SK-N-SH (cell line): ENCODE measurements at regions of chr20 and their contacts with region 1.

Region 1: GRCh38 chr20:740141-740540 is 28.2 kb downstream of the SLC52A3 start:
- DNase-seq: no peak
- H3K4me3 ChIP-seq: no peak overlapping the region
- H3K27ac ChIP-seq: no peak overlapping the region
- H3K4me1 ChIP-seq: no peaks in the 10 kb centered on the region; a peak in 1 of 4 replicates
- H3K27me3 ChIP-seq: no peaks in the 10 kb centered on the region; the same call in 1 of the 2 replicates
- CTCF ChIP-seq: no peak
- EP300 ChIP-seq: no peak
- RAD21 ChIP-seq: no peak

Region 2: GRCh38 chr20:431012-431904 is 308.9 kb before region 1 on chr20:
- CTCF ChIA-PET with region 1: interaction called, 10 read pairs
- POLR2A ChIA-PET with region 1: no interaction called
- DNase-seq: peak; percentile 91
- H3K4me3 ChIP-seq: no peak overlapping the region
- H3K27ac ChIP-seq: peak overlapping the region; percentile 22 to 51; a peak in 2 of 4 replicates
- H3K4me1 ChIP-seq: peaks cover 0 to 5% of the 10 kb centered on the region in 2 experiments; a peak in 1 of 4 replicates
- H3K27me3 ChIP-seq: no peaks in the 10 kb centered on the region
- CTCF ChIP-seq: peak; percentile 74
- EP300 ChIP-seq: no peak
- RAD21 ChIP-seq: peak; percentile 83

Region 3: GRCh38 chr20:561437-562231 is 178.5 kb before region 1 on chr20:
- CTCF ChIA-PET with region 1: interaction called, 83 read pairs
- POLR2A ChIA-PET with region 1: no interaction called
- DNase-seq: peak; percentile 83
- H3K4me3 ChIP-seq: no peak overlapping the region; a peak in 1 of 4 replicates
- H3K27ac ChIP-seq: no peak overlapping the region
- H3K4me1 ChIP-seq: no peaks in the 10 kb centered on the region
- H3K27me3 ChIP-seq: peaks cover 13% of the 10 kb centered on the region
- CTCF ChIP-seq: peak; percentile 94
- EP300 ChIP-seq: no peak
- RAD21 ChIP-seq: peak; percentile 95

Region 4: GRCh38 chr20:609371-609964 is 130.7 kb before region 1 on chr20:
- CTCF ChIA-PET with region 1: interaction called, 12 read pairs
- POLR2A ChIA-PET with region 1: no interaction called
- DNase-seq: peak; percentile 75
- H3K4me3 ChIP-seq: peak overlapping the region in 1 of 2 experiments; percentile 39; a peak in 2 of 4 replicates
- H3K27ac ChIP-seq: no peak overlapping the region
- H3K4me1 ChIP-seq: peaks cover 0 to 11% of the 10 kb centered on the region in 2 experiments; a peak in 1 of 4 replicates
- H3K27me3 ChIP-seq: peaks cover 39% of the 10 kb centered on the region
- CTCF ChIP-seq: no peak
- EP300 ChIP-seq: no peak
- RAD21 ChIP-seq: no peak

Region 5: DNA sequence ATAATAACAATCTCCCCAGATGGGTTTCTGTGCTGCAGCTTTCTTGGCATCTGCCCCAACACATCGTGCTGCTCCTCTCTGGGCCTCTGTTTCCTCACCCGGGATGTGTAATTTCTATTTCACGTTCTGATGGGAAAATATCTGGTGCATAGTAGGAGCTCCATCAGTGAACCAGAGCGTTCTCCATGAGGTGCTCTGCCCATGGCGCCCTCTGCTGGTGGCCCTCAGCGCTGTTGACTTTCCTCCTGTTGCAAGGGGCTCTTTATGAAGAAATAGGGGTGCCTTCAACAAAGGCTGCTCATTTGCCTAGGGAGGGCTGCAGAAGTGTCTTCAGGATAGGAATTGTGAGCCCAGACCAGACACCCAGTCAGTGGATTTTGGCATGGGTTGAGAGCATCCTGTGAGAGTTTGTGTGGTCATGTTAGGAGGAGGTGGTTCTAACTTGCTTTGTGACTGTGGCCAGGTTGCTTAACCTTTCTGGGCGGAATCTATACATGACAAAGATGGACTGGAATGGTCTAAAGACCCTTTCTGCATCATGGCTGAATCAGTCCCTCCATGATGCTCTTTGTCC is 72.7 kb before region 1 on chr20:
- CTCF ChIA-PET with region 1: interaction called, 71 read pairs
- POLR2A ChIA-PET with region 1: no interaction called
- DNase-seq: peak; percentile 79
- H3K4me3 ChIP-seq: peak overlapping the region in 1 of 2 experiments; percentile 17; a peak in 1 of 4 replicates
- H3K27ac ChIP-seq: no peak overlapping the region
- H3K4me1 ChIP-seq: no peaks in the 10 kb centered on the region; a peak in 1 of 4 replicates
- H3K27me3 ChIP-seq: no peaks in the 10 kb centered on the region
- CTCF ChIP-seq: peak; percentile 86
- EP300 ChIP-seq: no peak
- RAD21 ChIP-seq: peak; percentile 56

Region 6: GRCh38 chr20:760751-761417 is 20.7 kb after region 1 on chr20:
- CTCF ChIA-PET with region 1: interaction called, 11 read pairs
- POLR2A ChIA-PET with region 1: no interaction called
- DNase-seq: peak; percentile 78
- H3K4me3 ChIP-seq: peak overlapping the region in 1 of 2 experiments; percentile 32; a peak in 1 of 4 replicates
- H3K27ac ChIP-seq: no peak overlapping the region
- H3K4me1 ChIP-seq: peaks cover 0 to 3% of the 10 kb centered on the region in 2 experiments; a peak in 1 of 4 replicates
- H3K27me3 ChIP-seq: peaks cover 13% of the 10 kb centered on the region; the same call in 1 of the 2 replicates
- CTCF ChIP-seq: peak; percentile 60
- EP300 ChIP-seq: no peak
- RAD21 ChIP-seq: no peak

Region 7: GRCh38 chr20:949571-950116 is 209.5 kb after region 1 on chr20:
- CTCF ChIA-PET with region 1: no interaction called
- POLR2A ChIA-PET with region 1: no interaction called
- DNase-seq: no peak
- H3K4me3 ChIP-seq: no peak overlapping the region
- H3K27ac ChIP-seq: no peak overlapping the region
- H3K4me1 ChIP-seq: peaks cover 0 to 4% of the 10 kb centered on the region in 2 experiments; a peak in 1 of 4 replicates
- H3K27me3 ChIP-seq: no peaks in the 10 kb centered on the region; the same call in 1 of the 2 replicates
- CTCF ChIP-seq: no peak
- EP300 ChIP-seq: no peak
- RAD21 ChIP-seq: no peak